ENCODE measurements at regions of chr1 and their contacts with region 1.

Region 1: DNA sequence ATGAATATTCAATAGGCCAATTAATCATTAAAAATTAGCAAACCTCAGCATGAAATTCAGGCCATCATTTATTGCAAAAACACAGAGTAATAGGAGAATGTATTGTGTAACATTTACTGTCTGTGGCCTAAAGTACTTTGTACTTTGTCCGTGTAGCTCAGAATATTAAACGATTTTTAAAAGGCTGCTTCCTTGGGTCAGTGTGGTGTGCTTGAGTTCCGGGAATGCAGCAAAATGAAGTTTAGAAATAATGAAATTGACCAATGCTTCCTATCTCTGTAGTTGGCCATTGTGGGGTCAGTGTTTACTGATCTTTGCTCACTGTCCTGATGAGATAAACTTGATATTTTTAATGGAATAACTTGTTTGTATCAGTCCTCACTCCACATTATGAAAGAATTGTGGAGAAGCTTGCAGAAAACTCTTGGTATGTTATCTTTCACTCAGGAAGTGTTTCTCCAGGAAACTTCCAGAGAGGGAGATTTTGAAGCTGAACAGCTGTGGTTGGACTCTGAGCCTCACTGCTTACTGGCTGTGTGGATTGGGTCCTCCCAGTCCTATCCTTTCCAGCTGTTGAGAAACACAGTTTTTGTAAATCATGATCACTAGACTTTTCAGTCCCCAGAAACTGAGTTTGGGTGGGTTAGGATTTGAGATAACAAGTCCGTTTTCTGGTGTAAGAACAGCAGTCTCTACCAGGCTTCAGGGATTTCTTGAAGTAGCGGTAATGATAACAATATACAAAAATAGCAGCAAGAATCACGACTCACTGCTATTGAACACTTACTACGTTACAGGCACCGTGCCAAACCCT is 19.2 kb upstream of the MTARC1 start:
- DNase-seq: no peak
- H3K4me3 ChIP-seq: no peak overlapping the region; the same call in 1 of the 2 replicates
- H3K4me3 Mint-ChIP-seq: no peak overlapping the region
- H3K27ac Mint-ChIP-seq: no peak overlapping the region
- H3K4me1 ChIP-seq: peaks cover 34% of the 10 kb centered on the region
- H3K4me1 Mint-ChIP-seq: peaks cover 6% of the 10 kb centered on the region
- H3K27me3 ChIP-seq: no peaks in the 10 kb centered on the region
- H3K27me3 Mint-ChIP-seq: no peaks in the 10 kb centered on the region
- CTCF ChIP-seq: no peak

Region 2: DNA sequence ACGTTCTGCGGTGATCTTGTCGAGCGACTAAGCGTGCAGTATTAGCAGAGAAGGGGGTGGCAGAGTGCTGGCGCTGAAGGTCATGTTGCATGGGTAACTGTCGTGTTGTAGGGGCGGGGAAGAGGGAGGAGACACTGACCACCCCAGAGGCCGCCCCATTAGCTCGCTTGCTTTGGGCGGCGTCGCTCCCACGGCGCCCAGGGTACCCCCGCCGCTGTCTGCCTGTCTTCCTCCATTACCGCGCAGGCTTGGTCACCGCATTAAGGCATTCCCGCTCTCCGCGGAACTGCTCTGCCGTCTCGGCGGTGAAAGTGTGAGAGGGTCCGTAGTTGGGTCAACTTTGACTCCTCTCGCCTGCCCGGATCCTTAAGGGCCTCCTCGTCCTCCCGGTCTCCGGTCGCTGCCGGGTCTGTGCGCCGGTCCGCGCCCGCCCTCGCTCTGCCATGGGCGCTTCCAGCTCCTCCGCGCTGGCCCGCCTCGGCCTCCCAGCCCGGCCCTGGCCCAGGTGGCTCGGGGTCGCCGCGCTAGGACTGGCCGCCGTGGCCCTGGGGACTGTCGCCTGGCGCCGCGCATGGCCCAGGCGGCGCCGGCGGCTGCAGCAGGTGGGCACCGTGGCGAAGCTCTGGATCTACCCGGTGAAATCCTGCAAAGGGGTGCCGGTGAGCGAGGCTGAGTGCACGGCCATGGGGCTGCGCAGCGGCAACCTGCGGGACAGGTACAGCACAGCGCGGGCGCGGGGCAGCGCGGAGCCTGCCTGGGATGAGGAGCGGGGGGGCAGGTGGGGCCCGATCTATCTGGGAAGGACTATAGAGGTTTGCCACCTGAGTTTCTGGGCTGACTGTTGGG is 19.2 kb before region 1 on chr1 and contains the start of gene MTARC2:
- CTCF ChIA-PET with region 1: no interaction called
- POLR2A ChIA-PET with region 1: interaction called, 4 read pairs
- intact Hi-C with region 1: loop called (anchors 1 kb)
- DNase-seq: peak; percentile 80 to 81
- H3K4me3 ChIP-seq: peak within 1 kb of the TSS; percentile 59
- H3K4me3 Mint-ChIP-seq: peak within 1 kb of the TSS; percentile 77
- H3K27ac Mint-ChIP-seq: peak within 1 kb of the TSS; percentile 47
- H3K4me1 ChIP-seq: no peaks in the 10 kb centered on the region
- H3K4me1 Mint-ChIP-seq: peaks cover 13% of the 10 kb centered on the region
- H3K27me3 ChIP-seq: no peaks in the 10 kb centered on the region
- H3K27me3 Mint-ChIP-seq: no peaks in the 10 kb centered on the region
- CTCF ChIP-seq: no peak
- total RNA-seq, gene MTARC2: 15.8 and 16.5 TPM in 2 replicates